Activated CD8-positive, alpha-beta T cell treated with anti-CD3 and anti-CD28 coated beads, Interleukin-2, amount 10 ng/mL, durations not matched to agents 7 days and 5 days (primary cell): ENCODE measurements at regions of chr5 and their contacts with region 1.

Region 1: DNA sequence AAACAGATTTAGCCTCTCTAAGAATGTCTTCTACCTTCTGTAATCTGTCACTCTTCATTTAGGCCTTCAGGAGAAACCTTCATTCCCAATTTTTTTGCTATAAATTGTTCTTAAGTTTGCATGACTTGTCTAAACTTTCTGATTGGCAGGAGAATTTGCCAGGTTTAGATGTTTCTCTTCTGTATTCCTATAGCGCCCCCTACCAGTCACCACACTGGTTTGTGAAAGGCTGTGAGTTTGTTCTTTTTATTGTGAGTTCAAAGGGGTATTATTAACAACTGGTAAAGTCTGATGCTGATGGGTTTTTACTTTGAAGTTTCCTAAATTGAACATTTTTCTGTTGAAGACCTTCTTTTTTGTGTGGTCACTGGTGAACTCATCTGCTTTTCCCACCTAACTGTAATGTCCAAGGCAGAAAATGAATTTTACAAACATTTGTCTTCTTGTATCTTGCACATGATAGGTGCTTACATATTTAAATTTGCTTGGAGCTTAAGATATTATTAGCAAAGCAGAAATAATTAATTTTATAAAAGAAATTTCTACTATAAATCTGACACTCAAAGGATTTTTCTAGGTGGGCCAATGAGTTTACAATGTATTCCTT is 18.4 kb upstream of the F2RL2 start:
- DNase-seq: peak; percentile 77
- ATAC-seq: peak; percentile 63
- H3K4me3 Mint-ChIP-seq: no peak overlapping the region
- H3K27ac Mint-ChIP-seq: no peak overlapping the region
- H3K4me1 Mint-ChIP-seq: peaks cover 11% of the 10 kb centered on the region
- H3K27me3 Mint-ChIP-seq: no peaks in the 10 kb centered on the region

Region 2: GRCh38 chr5:76590027-76590426 is 51.6 kb before region 1 on chr5:
- CTCF ChIA-PET with region 1: no interaction called
- POLR2A ChIA-PET with region 1: no interaction called
- DNase-seq: no peak
- ATAC-seq: no peak
- H3K4me3 Mint-ChIP-seq: no peak overlapping the region
- H3K27ac Mint-ChIP-seq: no peak overlapping the region
- H3K4me1 Mint-ChIP-seq: no peaks in the 10 kb centered on the region
- H3K27me3 Mint-ChIP-seq: no peaks in the 10 kb centered on the region

Region 3: DNA sequence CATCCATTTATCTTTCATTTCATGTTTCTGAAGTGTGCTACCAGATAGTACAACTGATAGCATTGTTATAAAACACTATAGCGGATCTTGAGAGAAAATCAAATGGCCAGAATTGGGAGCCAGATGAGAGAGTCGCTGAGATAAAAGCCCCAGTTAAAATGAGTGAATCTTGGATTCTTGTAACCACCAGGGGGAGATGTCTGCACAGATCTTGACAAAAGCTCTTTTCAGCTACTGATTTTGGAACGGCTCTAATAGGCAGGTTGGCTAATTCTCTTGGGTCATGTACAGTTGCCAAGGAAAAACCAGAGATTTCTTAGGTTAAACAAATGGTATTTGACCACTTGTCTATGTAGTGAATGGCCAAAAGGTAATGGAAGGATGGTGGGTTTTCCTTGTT is 40.1 kb before region 1 on chr5:
- CTCF ChIA-PET with region 1: interaction called, 16 read pairs
- POLR2A ChIA-PET with region 1: no interaction called
- DNase-seq: peak; percentile 50
- ATAC-seq: peak; percentile 64
- H3K4me3 Mint-ChIP-seq: no peak overlapping the region
- H3K27ac Mint-ChIP-seq: no peak overlapping the region
- H3K4me1 Mint-ChIP-seq: no peaks in the 10 kb centered on the region
- H3K27me3 Mint-ChIP-seq: no peaks in the 10 kb centered on the region